CD4-positive, alpha-beta T cell (primary cell): ENCODE measurements at regions of chr3 and their contacts with region 1.

Region 1: GRCh38 chr3:186241910-186242821 is 119.9 kb downstream of the DGKG start:
- DNase-seq: peak in 7 of 14 experiments; percentile 8 to 60 (median 35)
- ATAC-seq: peak; percentile 82
- H3K4me3 ChIP-seq: no peak overlapping the region
- H3K4me3 Mint-ChIP-seq: no peak overlapping the region
- H3K27ac ChIP-seq: no peak overlapping the region
- H3K27ac Mint-ChIP-seq: no peak overlapping the region
- H3K4me1 ChIP-seq: peaks cover 10% of the 10 kb centered on the region
- H3K4me1 Mint-ChIP-seq: no peaks in the 10 kb centered on the region
- H3K27me3 ChIP-seq: peaks cover 0 to 2% of the 10 kb centered on the region in 2 experiments
- H3K27me3 Mint-ChIP-seq: peaks cover 15% of the 10 kb centered on the region
- CTCF ChIP-seq: no peak

Region 2: GRCh38 chr3:185976977-185977678 is 265.0 kb before region 1 on chr3:
- CTCF ChIA-PET with region 1: no interaction called
- POLR2A ChIA-PET with region 1: no interaction called
- intact Hi-C with region 1: loop called in 1 of 2 experiments (anchors 2 kb)
- DNase-seq: peak; percentile 59 to 88 (median 76)
- ATAC-seq: peak; percentile 87
- H3K4me3 ChIP-seq: no peak overlapping the region
- H3K4me3 Mint-ChIP-seq: no peak overlapping the region
- H3K27ac ChIP-seq: no peak overlapping the region
- H3K27ac Mint-ChIP-seq: no peak overlapping the region
- H3K4me1 ChIP-seq: no peaks in the 10 kb centered on the region
- H3K4me1 Mint-ChIP-seq: peaks cover 8% of the 10 kb centered on the region
- H3K27me3 ChIP-seq: no peaks in the 10 kb centered on the region
- H3K27me3 Mint-ChIP-seq: no peaks in the 10 kb centered on the region
- CTCF ChIP-seq: peak; percentile 95